ENCODE measurements at regions of chr9 and their contacts with region 1.

Region 1: DNA sequence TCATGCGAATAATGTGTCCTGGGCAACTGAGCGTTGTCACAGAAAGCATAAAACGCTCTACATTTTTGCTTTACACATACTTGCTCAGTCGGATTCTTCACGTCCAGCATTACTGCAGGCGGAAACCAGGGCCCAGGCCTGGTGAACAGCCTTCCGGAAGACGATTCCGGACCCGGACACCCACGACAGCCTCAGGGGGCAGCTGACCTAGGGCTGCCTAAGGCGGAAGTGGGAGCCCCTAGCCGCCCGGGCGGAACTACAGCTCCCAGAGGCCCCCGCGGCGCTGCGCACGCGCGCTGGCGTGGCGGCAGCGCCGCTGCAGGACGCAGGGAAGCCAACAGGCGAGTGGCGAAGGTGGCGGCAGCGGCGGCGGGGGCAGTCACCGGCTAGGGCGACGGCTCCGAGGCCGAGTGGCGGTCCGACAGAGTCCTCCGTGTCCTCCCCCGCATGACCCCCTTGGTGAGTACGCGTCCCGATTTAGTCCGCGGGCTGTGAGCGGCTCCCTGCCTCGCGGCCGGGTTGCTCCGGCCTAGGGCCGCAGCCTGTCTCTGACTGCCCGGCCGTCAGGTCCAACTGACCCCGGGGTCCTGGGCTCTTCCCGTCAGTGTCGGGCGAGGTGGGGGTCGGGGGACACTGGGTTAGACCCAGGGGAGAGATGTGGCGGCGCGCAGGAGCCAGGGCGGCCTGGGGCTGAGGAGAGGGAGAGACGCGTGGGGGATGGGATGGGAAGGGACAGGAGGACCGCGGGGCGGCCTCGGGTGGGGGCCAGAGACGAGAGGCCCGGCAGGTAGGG is at the start of gene GAPVD1:
- DNase-seq: peak; percentile 88
- ATAC-seq: peak; percentile 97
- H3K4me3 ChIP-seq: peak within 1 kb of the TSS; percentile 94
- H3K27ac ChIP-seq: peak within 1 kb of the TSS; percentile 97
- H3K4me1 ChIP-seq: peaks cover 21% of the 10 kb centered on the region
- H3K27me3 ChIP-seq: no peaks in the 10 kb centered on the region
- CTCF ChIP-seq: peak; percentile 39 to 63 (median 44); a peak in 5 of 6 replicates
- EP300 ChIP-seq: no peak
- POLR2A ChIP-seq: peak; percentile 89
- RAD21 ChIP-seq: no peak
- polyA plus RNA-seq, gene GAPVD1: 4.3 to 5.2 TPM

Region 2: GRCh38 chr9:125189361-125190289 is 72.1 kb before region 1 on chr9 and contains the start of gene PPP6C:
- CTCF ChIA-PET with region 1: no interaction called
- POLR2A ChIA-PET with region 1: no interaction called
- RAD21 ChIA-PET with region 1: no interaction called
- SMC1A ChIA-PET with region 1: no interaction called
- in situ Hi-C with region 1: no loop called
- intact Hi-C with region 1: loop called (anchors 2 kb)
- DNase-seq: peak; percentile 76
- ATAC-seq: peak; percentile 97
- H3K4me3 ChIP-seq: peak within 1 kb of the TSS; percentile 93
- H3K27ac ChIP-seq: peak within 1 kb of the TSS; percentile 89
- H3K4me1 ChIP-seq: peaks cover 4% of the 10 kb centered on the region
- H3K27me3 ChIP-seq: no peaks in the 10 kb centered on the region
- CTCF ChIP-seq: peak; percentile 68 to 84 (median 75)
- EP300 ChIP-seq: peak in 1 of 2 experiments; percentile 39; a peak in 1 of 4 replicates
- POLR2A ChIP-seq: peak; percentile 75
- RAD21 ChIP-seq: 0 out of 2 replicates have a peak, but pooled peaks have one; percentile 14
- polyA plus RNA-seq, gene PPP6C: 26.8 to 33.8 TPM

Region 3: GRCh38 chr9:125200210-125201047 is 61.3 kb before region 1 on chr9 and contains the start of gene RABEPK:
- CTCF ChIA-PET with region 1: no interaction called
- POLR2A ChIA-PET with region 1: interaction called, 4 read pairs
- RAD21 ChIA-PET with region 1: no interaction called
- SMC1A ChIA-PET with region 1: no interaction called
- in situ Hi-C with region 1: no loop called
- intact Hi-C with region 1: loop called (anchors 5 kb)
- DNase-seq: peak; percentile 60
- ATAC-seq: peak; percentile 99
- H3K4me3 ChIP-seq: peak within 1 kb of the TSS; percentile 99
- H3K27ac ChIP-seq: peak within 1 kb of the TSS; percentile 81
- H3K4me1 ChIP-seq: peaks cover 3% of the 10 kb centered on the region
- H3K27me3 ChIP-seq: no peaks in the 10 kb centered on the region; a peak in 1 of 4 replicates
- CTCF ChIP-seq: no peak
- EP300 ChIP-seq: no peak
- POLR2A ChIP-seq: peak; percentile 92
- RAD21 ChIP-seq: no peak
- polyA plus RNA-seq, gene RABEPK: 41.7 to 59.8 TPM

Region 4: GRCh38 chr9:125241000-125241862 is 20.5 kb before region 1 on chr9 and contains the start of gene HSPA5:
- CTCF ChIA-PET with region 1: interaction called, 13 read pairs
- POLR2A ChIA-PET with region 1: interaction called, 39 read pairs
- RAD21 ChIA-PET with region 1: interaction called, 15 read pairs
- SMC1A ChIA-PET with region 1: interaction called, 7 read pairs
- in situ Hi-C with region 1: no loop called
- intact Hi-C with region 1: loop called (anchors 2 kb)
- DNase-seq: peak; percentile 99
- ATAC-seq: peak; percentile 95
- H3K4me3 ChIP-seq: peak within 1 kb of the TSS; percentile 95
- H3K27ac ChIP-seq: peak within 1 kb of the TSS; percentile 99
- H3K4me1 ChIP-seq: peaks cover 6% of the 10 kb centered on the region
- H3K27me3 ChIP-seq: no peaks in the 10 kb centered on the region
- CTCF ChIP-seq: 0 out of 6 replicates have a peak, but pooled peaks of 1 of the 3 experiments have one; percentile 2
- EP300 ChIP-seq: no peak
- POLR2A ChIP-seq: peak; percentile 97
- RAD21 ChIP-seq: no peak
- polyA plus RNA-seq, gene HSPA5: 39.8 to 105 TPM